MCF 10A (cell line): ENCODE measurements at regions of chr16 and their contacts with region 1.

Region 1: GRCh38 chr16:71499775-71500364 is 10.7 kb upstream of the ZNF19 start:
- DNase-seq: peak; percentile 56
- H3K4me3 Mint-ChIP-seq: no peak overlapping the region
- H3K27ac Mint-ChIP-seq: no peak overlapping the region
- H3K4me1 Mint-ChIP-seq: peaks cover 2% of the 10 kb centered on the region
- H3K27me3 Mint-ChIP-seq: peaks cover 9% of the 10 kb centered on the region
- CTCF ChIP-seq: peak; percentile 73

Region 2: GRCh38 chr16:71412270-71413160 is 87.4 kb before region 1 on chr16:
- CTCF ChIA-PET with region 1: interaction called, 212 read pairs
- POLR2A ChIA-PET with region 1: interaction called, 11 read pairs
- intact Hi-C with region 1: loop called (anchors 1 kb)
- DNase-seq: peak; percentile 80
- H3K4me3 Mint-ChIP-seq: no peak overlapping the region
- H3K27ac Mint-ChIP-seq: no peak overlapping the region
- H3K4me1 Mint-ChIP-seq: no peaks in the 10 kb centered on the region
- H3K27me3 Mint-ChIP-seq: peaks cover 53% of the 10 kb centered on the region
- CTCF ChIP-seq: peak; percentile 63

Region 3: DNA sequence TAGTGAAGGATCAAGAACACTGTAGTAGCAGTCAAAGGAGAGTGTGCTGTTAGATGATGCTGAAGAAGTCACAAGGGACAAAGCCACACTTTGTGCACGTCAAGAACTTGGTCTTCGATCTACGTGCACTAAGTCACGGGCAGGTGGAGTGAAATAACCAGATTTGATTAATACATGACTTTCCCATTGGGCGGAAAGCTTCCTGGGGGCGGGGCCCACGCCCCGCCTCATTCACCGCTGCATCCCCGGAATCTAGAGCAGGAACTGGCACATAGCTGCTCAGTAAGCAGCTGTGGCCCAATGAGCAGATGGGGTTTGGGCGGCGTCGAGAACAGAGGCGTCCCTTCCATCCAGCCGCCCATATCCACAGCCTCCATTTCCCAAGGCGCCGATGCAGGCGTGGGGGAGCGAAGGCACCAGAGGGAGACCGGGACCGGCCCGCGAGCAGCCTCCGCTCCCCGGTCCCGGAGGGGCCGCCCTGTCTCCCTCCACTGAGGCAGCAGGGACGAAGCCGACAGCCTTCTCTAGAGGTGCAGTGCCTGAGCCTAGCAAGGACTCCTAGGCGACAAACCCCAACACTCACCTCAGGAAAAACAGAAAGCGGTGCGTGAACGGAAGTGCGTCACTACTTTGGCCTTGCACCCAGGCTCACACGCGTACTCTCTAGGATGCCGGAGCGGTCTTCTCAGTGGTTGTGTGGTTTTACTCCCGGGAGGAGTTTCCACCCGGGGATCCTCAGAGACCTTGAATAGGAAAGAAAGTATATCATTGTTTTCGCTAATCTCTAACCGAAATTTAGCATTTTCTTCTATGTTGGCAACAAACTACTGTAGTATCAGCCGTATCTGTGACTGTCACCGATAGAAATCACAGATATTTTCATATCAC is 15.6 kb before region 1 on chr16:
- CTCF ChIA-PET with region 1: interaction called, 36 read pairs
- POLR2A ChIA-PET with region 1: interaction called, 4 read pairs
- intact Hi-C with region 1: no loop called
- DNase-seq: peak; percentile 88
- H3K4me3 Mint-ChIP-seq: peak overlapping the region; percentile 79
- H3K27ac Mint-ChIP-seq: peak overlapping the region; percentile 72
- H3K4me1 Mint-ChIP-seq: peaks cover 8% of the 10 kb centered on the region
- H3K27me3 Mint-ChIP-seq: no peaks in the 10 kb centered on the region
- CTCF ChIP-seq: no peak

Region 4: GRCh38 chr16:71532366-71532765 is 32.5 kb after region 1 on chr16:
- CTCF ChIA-PET with region 1: interaction called, 82 read pairs
- POLR2A ChIA-PET with region 1: no interaction called
- intact Hi-C with region 1: loop called (anchors 1 kb)
- DNase-seq: no peak
- H3K4me3 Mint-ChIP-seq: no peak overlapping the region
- H3K27ac Mint-ChIP-seq: no peak overlapping the region
- H3K4me1 Mint-ChIP-seq: no peaks in the 10 kb centered on the region
- H3K27me3 Mint-ChIP-seq: no peaks in the 10 kb centered on the region
- CTCF ChIP-seq: no peak

Region 5: GRCh38 chr16:71658771-71659170 is 158.9 kb after region 1 on chr16:
- CTCF ChIA-PET with region 1: no interaction called
- POLR2A ChIA-PET with region 1: no interaction called
- intact Hi-C with region 1: no loop called
- DNase-seq: no peak
- H3K4me3 Mint-ChIP-seq: no peak overlapping the region
- H3K27ac Mint-ChIP-seq: no peak overlapping the region
- H3K4me1 Mint-ChIP-seq: no peaks in the 10 kb centered on the region
- H3K27me3 Mint-ChIP-seq: no peaks in the 10 kb centered on the region
- CTCF ChIP-seq: no peak